ENCODE measurements at regions of chr1 and their contacts with region 1.

Region 1: GRCh38 chr1:192489748-192490147 is 85.8 kb upstream of the RGS1 start:
- DNase-seq: peak; percentile 54
- H3K4me3 Mint-ChIP-seq: no peak overlapping the region
- H3K27ac Mint-ChIP-seq: peak overlapping the region; percentile 93
- H3K4me1 Mint-ChIP-seq: peaks cover 25% of the 10 kb centered on the region
- H3K27me3 Mint-ChIP-seq: no peaks in the 10 kb centered on the region
- CTCF ChIP-seq: no peak

Region 2: GRCh38 chr1:192530254-192530653 is 40.5 kb after region 1 on chr1:
- CTCF ChIA-PET with region 1: interaction called, 6 read pairs
- POLR2A ChIA-PET with region 1: no interaction called
- intact Hi-C with region 1: loop called (anchors 5 kb)
- DNase-seq: no peak
- H3K4me3 Mint-ChIP-seq: no peak overlapping the region
- H3K27ac Mint-ChIP-seq: no peak overlapping the region
- H3K4me1 Mint-ChIP-seq: peaks cover 19% of the 10 kb centered on the region
- H3K27me3 Mint-ChIP-seq: no peaks in the 10 kb centered on the region
- CTCF ChIP-seq: no peak

Region 3: DNA sequence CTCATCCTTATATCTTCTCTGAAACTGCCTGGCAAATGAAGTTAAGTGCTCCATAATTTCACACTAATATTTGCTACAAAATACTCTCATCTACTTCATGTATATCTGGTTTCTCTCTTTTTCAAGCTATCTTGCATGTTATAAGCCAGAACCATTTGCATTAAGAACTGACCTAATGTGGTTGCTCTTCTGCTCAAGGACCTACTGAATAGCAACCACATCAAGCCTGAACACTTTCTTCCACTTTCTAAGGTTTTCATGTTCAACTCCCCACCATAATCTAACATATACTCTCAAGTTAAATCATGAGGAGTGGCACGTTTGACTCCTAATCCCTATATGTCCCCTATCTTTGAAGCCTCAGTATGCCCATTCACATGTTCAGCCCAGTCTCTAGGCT is 113.0 kb after region 1 on chr1:
- CTCF ChIA-PET with region 1: no interaction called
- POLR2A ChIA-PET with region 1: no interaction called
- intact Hi-C with region 1: no loop called
- DNase-seq: no peak
- H3K4me3 Mint-ChIP-seq: no peak overlapping the region
- H3K27ac Mint-ChIP-seq: no peak overlapping the region
- H3K4me1 Mint-ChIP-seq: peaks cover 15% of the 10 kb centered on the region
- H3K27me3 Mint-ChIP-seq: no peaks in the 10 kb centered on the region
- CTCF ChIP-seq: no peak

Measured in MCF 10A (cell line).